Cardiac septum (tissue), 1 donor: ENCODE measurements at regions of chr5 and their contacts with region 1.

Region 1: DNA sequence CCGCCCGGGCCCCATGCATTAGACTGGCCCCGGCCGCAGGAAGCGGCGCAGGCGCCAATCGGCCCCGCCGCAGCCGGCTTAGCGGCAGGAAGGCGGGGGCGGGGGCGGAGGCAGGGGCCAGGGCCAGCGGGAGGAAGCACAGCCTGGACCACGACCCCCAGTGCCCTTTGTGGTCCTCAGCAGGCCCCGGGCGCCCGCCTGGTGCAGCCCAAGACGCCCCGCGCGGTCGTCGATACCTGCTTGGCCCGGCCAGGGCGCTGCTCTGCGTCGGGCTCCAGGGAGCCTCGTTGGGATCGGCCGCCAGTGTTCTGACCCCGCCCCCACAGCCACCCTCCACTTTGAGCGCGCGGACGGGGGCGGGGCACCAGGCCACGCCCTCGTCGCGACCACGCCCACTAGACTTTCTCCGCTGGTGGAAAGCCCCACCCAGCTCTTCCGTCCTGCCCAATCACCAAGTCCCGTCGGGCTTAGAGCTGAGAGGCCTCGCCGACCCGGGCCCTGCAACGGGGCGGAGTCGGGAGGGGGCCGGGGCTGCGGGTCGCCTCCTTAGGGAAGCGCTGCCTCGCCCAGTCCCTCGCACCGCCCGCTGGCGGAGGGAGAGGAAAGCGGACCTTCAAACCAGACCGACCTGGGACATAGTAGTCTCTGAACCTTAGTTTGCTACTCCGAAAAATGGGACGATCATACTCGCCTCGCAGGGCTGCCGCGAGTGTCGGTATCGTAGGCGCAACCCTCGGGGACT is at the start of gene PDLIM7:
- DNase-seq: peak; percentile 98
- total RNA-seq, gene PDLIM7: 133 TPM

Region 2: GRCh38 chr5:177390363-177391300 is 106.8 kb before region 1 on chr5:
- intact Hi-C with region 1: loop called (anchors 2 kb)
- DNase-seq: peak; percentile 90

Region 3: GRCh38 chr5:177478711-177479646 is 18.5 kb before region 1 on chr5:
- intact Hi-C with region 1: loop called (anchors 2 kb)
- DNase-seq: peak; percentile 95

Region 4: DNA sequence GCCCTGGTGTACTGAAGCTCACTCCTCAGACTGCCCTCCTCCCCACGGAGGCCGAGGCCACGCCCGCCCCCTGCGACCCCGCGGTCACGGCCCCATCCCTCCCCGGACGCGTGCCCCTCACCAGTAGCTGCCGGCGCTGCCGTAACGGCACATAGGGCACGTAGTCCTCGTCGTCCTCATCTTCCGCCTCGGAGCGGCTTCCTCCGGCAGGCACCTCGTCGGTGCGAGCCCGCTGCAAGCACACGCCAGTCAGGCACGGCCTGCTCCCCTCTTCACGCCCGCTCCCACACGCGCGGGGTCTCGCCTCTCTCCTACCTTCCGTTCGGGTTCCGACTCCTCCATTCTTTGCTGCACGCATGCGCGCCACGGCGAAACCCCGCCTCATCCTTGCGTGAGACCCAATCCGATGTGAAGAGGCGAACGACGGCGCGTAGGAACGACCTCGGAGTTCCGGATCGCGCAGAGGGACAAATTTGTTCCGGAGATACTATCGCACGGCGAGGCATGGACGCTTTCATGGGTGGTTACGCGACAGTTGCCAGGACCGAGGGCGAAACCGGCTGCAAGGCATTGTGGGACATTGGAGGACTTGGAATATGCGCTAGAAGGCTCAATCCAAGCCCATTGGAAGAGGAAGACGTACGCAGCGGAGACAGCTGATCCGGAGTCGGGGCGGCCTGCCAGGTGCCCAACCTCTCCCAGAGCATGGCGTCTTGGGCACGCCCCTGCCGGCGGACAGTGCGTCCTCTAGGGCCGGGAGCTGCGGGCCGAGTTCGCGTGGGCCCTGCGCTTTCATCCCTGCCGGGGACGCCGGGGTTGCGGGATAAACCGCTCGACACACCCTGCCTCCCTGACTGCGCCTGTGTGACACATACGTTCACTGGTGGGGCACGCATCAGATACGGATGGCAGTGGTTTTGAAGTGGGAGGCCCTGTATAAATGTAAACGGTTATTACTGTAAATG is 19.4 kb after region 1 on chr5 and contains the start of gene DDX41:
- intact Hi-C with region 1: loop called (anchors 2 kb)
- DNase-seq: peak; percentile 98
- total RNA-seq, gene DDX41: 37.9 TPM